AG04449 (cell line): ENCODE measurements at regions of chr7 and their contacts with region 1.

Region 1: GRCh38 chr7:2670720-2671391 is 17.1 kb upstream of the AMZ1 start:
- DNase-seq: no peak
- H3K4me3 ChIP-seq: no peak overlapping the region
- CTCF ChIP-seq: peak; percentile 96

Region 2: GRCh38 chr7:1940402-1940786 is 730.5 kb before region 1 on chr7:
- CTCF ChIA-PET with region 1: no interaction called
- POLR2A ChIA-PET with region 1: no interaction called
- DNase-seq: no peak
- H3K4me3 ChIP-seq: no peak overlapping the region
- CTCF ChIP-seq: no peak

Region 3: GRCh38 chr7:2651847-2652735 is 18.8 kb before region 1 on chr7:
- CTCF ChIA-PET with region 1: interaction called, 13 read pairs
- POLR2A ChIA-PET with region 1: no interaction called
- DNase-seq: no peak
- H3K4me3 ChIP-seq: no peak overlapping the region
- CTCF ChIP-seq: no peak

Region 4: DNA sequence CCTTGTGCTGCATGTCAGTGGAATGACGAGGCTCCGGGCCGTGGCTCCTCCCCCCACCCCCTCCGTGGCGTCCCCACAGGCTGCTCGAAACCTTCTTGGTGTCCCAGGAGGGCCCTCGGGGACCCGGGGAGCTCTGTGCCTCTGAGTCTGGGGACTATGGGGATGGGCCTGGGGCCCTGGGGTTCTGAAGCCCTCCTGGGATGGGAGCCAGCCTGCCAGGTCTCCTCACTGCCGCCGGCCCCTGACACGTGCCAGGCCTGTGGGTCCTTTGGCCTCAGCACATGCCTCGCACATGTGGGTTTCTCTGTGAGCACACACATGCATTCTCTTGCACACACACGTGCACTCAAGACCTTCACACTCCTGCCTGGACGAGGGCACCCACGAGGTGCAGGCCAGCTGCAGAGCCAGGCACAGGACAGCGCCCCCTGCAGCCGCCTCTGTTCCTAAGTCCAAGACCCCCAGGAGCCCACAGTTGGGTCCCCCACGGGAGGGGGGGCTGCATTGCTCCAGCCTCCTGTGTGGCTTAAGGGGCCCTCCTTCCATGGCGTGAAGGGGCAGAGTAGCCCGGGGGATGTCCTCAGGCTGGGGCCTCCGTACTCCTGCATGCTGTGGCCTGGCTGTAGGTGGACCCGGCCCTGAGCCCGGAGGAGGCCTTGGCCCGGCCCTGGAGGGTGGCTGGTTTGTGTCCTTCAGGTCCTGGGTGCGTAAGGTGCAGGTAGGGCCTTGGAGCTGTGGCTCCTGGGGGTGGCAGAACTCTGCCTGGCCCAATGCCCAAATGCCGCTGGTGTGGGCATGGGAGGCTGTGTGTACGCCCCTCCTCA is 10.1 kb before region 1 on chr7:
- CTCF ChIA-PET with region 1: interaction called, 13 read pairs
- POLR2A ChIA-PET with region 1: no interaction called
- DNase-seq: no peak
- H3K4me3 ChIP-seq: no peak overlapping the region
- CTCF ChIP-seq: peak; percentile 15

Region 5: DNA sequence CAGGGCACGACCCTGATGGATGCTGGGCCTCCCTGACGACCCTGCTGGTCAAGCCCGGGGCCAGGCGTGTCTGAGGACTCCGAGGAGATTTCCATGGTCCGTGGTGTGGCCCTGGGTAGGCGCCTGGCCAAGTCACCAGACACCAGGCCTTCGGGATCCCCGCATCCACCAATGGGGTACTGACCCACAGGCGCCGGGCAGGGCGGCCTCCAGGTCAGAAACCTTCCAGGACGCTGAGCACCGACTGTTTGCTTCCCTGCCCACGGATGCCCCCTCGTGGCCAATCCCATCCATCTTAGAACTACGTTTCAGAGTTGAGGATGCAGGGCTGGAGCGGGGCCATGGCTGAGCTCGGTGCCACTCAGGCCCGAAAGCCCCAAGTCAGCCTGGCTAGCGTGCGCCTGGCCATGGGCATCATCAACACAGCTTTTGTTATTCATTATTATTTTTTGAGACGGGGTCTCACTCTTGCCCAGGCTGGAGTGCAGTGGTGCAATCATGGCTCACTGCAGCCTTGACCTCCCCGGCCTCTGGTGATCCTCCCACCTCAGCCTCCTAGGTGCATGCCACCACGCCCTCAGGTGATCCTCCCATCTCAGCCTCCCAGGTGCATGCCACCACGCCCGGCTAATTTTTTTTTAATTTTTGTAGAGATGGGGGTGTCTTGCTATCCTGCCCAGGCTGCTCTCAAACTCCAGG is 10.1 kb after region 1 on chr7:
- CTCF ChIA-PET with region 1: interaction called, 18 read pairs
- POLR2A ChIA-PET with region 1: no interaction called
- DNase-seq: no peak
- H3K4me3 ChIP-seq: no peak overlapping the region
- CTCF ChIP-seq: peak; percentile 85

Region 6: GRCh38 chr7:2800931-2801688 is 130.3 kb after region 1 on chr7:
- CTCF ChIA-PET with region 1: no interaction called
- POLR2A ChIA-PET with region 1: no interaction called
- DNase-seq: no peak
- H3K4me3 ChIP-seq: no peak overlapping the region
- CTCF ChIP-seq: no peak

Region 7: GRCh38 chr7:3300651-3301378 is 630.0 kb after region 1 on chr7 and contains the start of gene SDK1:
- CTCF ChIA-PET with region 1: no interaction called
- POLR2A ChIA-PET with region 1: no interaction called
- DNase-seq: peak; percentile 4
- H3K4me3 ChIP-seq: peak within 1 kb of the TSS; percentile 42
- CTCF ChIP-seq: peak; percentile 81

Region 8: DNA sequence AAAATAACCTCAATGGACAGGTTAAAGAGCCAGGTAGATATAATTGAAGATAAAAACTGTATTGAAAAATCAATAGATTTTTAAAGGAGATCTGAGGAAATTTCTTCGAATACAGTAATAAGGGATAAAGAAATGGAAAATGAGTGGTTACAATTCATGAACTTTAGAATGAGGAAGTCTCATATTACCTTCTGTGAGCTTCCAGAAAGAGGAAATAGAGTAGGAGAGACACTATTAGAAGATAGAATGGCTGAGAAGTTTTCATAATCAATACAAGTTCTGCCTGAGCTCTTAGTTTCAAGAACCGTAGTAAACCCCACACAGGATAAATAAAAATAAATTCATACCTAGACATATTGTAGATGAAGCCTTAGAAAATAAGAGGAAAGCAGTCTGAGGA is 641.7 kb after region 1 on chr7:
- CTCF ChIA-PET with region 1: no interaction called
- POLR2A ChIA-PET with region 1: no interaction called
- DNase-seq: no peak
- H3K4me3 ChIP-seq: no peak overlapping the region
- CTCF ChIP-seq: no peak